Sigmoid colon (tissue), 7 donors: ENCODE measurements at regions of chr3 and their contacts with region 1.

Region 1: DNA sequence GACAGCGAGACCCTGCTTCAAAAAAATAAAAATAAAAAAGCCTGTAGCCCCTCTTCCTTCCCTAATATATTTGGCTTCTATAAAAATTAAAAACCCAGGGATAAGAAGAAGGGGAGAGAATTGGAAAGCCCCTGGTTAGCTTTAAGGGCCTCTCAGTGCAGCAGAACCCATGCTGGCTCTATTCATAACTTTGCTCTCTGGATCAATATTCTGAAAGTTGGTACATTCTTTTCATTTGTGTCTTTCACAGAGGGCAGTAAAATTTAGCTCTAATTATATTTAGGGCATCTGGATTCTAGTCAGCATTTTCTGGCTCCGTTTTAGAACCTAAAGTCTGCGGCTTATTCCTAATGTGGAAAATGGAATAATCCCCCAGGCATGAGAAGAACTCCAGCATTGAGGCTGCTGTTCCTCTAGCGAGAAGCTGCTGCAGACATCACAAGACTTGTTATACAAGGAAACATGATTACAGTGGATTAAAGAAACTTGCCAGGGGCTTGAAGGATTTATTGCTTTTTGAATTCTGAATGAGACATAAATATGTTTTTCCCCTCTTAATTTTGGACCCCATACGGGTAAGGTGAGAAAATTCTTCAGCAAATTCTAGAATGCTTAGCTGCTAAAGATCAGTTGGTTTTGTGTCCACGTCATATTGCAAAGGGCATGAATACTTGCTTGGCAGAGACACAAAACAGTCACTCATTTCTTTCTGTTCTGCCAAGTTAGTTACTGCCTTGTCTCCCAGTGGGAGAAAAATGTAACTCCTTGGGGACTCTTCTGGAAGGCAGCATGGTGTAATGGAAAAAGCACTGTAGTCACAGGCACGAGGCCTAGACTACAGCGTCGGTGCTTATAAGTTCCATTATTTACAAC is 177.7 kb downstream of the VGLL4 start:
- DNase-seq: peak; percentile 89
- H3K4me3 ChIP-seq: no peak overlapping the region
- H3K27ac ChIP-seq: peak overlapping the region; percentile 79 to 96 (median 86)
- H3K4me1 ChIP-seq: peaks cover 0 to 43% (median 40%) of the 10 kb centered on the region in 4 donors
- H3K27me3 ChIP-seq: no peaks in the 10 kb centered on the region
- CTCF ChIP-seq: no peak
- EP300 ChIP-seq: peak; percentile 81 to 99 (median 94)
- POLR2A ChIP-seq: no peak

Region 2: DNA sequence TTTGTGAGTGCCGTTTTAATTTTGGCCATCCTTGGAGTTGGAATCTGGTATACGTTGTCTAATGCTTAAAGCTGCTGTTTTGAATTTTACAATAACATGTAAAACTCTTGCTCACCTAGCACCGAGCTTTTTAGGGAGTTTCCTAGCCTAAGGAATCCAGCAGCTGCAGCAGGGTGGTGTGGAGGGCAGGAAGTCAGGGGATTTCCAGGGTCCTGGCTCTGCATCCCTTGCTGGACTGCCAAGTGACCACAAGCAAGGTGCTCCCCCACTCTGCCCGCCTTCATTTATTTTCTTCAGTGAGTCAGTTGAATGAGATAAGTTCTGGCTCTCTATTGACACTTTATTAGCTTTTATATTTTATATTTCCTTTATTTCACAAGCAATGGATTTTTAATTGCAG is 80.1 kb before region 1 on chr3:
- intact Hi-C with region 1: loop called (anchors 5 kb)
- DNase-seq: no peak
- H3K4me3 ChIP-seq: no peak overlapping the region
- H3K27ac ChIP-seq: peak overlapping the region in 2 of 4 donors; percentile 68 to 72
- H3K4me1 ChIP-seq: peaks cover 0 to 41% (median 26%) of the 10 kb centered on the region in 4 donors
- H3K27me3 ChIP-seq: no peaks in the 10 kb centered on the region
- CTCF ChIP-seq: no peak
- EP300 ChIP-seq: no peak
- POLR2A ChIP-seq: no peak

Region 3: DNA sequence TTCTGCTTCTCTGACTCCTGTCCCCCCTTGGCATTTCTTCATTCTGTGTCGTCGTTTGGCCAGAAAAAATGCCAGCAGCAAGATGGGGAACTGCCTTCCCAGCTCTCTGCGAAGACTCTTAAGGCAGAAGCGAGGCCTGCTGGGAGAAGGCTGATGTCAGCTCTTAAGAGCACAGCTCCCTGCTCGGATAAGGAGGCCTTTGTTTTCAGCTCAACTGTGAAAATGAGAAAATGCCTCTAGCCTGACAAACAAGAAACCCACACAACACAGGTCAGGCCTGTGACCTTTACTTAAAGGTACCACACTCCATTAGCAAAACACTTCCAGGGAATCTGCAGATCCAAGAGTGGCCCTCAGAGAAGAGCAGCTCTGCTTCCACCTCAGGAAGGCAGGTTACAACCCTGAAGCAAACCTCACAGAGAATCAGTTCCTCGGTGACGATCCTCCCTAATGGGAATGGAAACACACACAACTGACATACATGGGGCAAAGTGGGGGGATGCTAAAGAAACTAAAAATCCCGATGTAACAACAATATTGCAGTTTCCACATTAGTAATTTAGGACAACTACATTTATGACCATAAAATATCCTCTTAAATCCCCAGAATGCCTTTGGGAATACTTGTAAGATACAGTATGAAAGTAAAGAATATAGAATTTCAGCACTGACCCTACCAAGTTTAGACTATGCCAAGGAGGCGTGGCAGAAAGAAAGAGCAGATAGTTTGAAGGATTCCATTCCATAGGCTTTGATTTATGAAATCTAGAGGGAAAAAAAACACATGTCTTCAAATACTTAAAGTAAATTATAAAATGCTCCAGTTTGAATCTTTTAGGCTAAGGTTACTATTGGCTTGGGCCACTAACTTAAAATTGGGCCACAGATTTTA is 125.7 kb after region 1 on chr3:
- intact Hi-C with region 1: loop called (anchors 5 kb)
- DNase-seq: peak; percentile 85
- H3K4me3 ChIP-seq: peak overlapping the region in 1 of 4 donors; percentile 2
- H3K27ac ChIP-seq: peak overlapping the region; percentile 69 to 84 (median 78)
- H3K4me1 ChIP-seq: peaks cover 0 to 85% (median 77%) of the 10 kb centered on the region in 4 donors
- H3K27me3 ChIP-seq: no peaks in the 10 kb centered on the region
- CTCF ChIP-seq: no peak
- EP300 ChIP-seq: peak in 1 of 4 donors; percentile 29
- POLR2A ChIP-seq: no peak

Region 4: GRCh38 chr3:11719406-11720230 is 253.6 kb after region 1 on chr3:
- intact Hi-C with region 1: loop called (anchors 10 kb)
- DNase-seq: peak; percentile 85
- H3K4me3 ChIP-seq: peak overlapping the region; percentile 74 to 92 (median 80)
- H3K27ac ChIP-seq: peak overlapping the region; percentile 91 to 94 (median 94)
- H3K4me1 ChIP-seq: peaks cover 0 to 26% (median 22%) of the 10 kb centered on the region in 4 donors
- H3K27me3 ChIP-seq: no peaks in the 10 kb centered on the region
- CTCF ChIP-seq: no peak
- EP300 ChIP-seq: no peak
- POLR2A ChIP-seq: no peak